ENCODE measurements at regions of chr11 and their contacts with region 1.

Region 1: DNA sequence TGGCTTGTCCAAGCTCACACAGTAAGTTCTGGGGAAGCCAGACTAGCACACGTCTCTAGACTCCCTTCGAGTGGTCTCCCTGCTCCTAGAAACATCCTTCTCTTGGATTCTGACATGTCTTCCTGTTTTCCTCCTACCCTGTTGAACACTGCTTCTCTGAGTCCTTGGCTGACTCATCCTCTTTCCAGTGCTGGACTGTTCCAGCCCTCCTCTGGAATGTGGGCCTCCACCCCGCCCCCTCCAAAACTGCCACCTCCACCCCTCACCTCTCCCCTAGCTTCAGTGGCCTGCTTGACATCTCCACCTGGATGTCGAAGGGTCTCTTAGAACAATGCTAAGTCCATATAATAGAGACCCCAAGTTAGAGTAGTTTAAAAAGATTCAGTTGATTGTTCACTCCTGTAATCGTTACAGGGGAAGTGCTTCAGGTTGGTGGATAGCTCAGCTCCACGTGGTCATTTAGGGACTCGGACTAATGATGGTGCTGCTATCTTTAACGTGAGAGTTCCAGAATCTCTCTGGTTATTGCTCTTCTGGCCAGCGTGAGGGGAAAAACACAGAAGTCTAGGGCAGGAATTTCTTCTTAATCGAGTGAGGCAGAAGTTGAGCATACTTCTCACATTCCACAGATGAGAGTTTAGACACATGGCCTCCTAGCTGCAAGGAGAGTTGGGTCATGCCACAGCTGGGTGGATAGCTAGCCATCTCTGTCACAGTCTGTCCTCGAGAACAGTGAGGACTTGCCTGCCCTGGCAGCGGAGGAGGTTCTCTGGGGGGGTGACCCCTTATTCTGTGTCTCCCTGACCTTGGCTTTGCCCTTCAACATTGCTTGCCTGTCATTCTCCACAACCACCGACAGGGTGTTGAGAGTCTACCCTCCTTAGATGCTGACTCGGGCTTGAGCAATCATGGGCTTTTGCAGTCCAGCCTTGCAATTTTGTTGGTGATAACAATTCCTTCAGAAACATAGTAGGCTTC is 4.7 kb upstream of the C11orf96 start:
- DNase-seq: peak; percentile 70
- ATAC-seq: peak; percentile 68
- H3K4me3 ChIP-seq: no peak overlapping the region
- H3K27ac ChIP-seq: peak overlapping the region; percentile 9; the same call in 1 of the 2 replicates
- H3K4me1 ChIP-seq: peaks cover 19% of the 10 kb centered on the region
- H3K27me3 ChIP-seq: peaks cover 21% of the 10 kb centered on the region
- CTCF ChIP-seq: no peak
- POLR2A ChIP-seq: no peak
- RAD21 ChIP-seq: no peak

Region 2: DNA sequence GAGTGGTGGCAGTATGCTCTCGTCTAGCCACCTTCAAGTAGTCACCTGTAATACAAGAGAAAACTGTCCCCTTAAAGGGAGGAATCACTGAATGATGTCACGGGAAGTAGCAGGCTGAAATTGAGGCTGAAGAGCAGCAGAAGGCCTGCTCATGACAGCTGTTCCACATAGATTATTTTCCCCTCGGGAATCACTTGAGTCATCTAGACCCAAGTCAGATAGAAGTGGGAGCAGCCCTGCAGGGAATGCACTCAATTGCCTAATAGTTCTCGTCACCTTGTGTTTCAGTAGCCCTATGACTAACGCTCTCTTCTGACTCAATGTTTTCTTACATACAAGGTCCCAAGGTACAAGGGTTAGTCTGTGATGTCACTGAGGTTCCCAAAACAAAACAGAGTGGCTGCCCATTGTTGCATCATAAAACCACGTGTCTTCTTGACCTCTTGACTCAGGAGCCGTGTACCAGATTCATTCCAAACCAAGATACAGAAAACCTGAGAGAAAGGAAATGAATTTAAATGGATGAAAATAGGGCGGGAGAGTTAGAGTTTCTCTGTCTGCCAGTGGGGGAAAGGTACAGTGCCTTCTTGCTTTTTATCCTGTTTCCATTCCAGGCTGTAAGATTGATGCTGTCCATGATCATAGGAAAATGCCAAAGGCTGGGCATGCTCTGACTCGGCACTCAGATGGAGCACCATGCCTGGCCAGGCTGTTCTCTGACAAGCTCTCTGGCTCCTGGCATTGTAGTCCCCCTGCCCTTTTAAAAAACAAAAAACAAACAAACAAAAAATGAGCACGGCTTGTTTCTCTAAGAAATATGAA is 16.9 kb before region 1 on chr11:
- CTCF ChIA-PET with region 1: interaction called, 3 read pairs
- POLR2A ChIA-PET with region 1: no interaction called
- dilution Hi-C with region 1: no loop called
- in situ Hi-C with region 1: no loop called
- intact Hi-C with region 1: loop called (anchors 2 kb)
- DNase-seq: peak; percentile 100
- ATAC-seq: peak; percentile 79
- H3K4me3 ChIP-seq: no peak overlapping the region
- H3K27ac ChIP-seq: peak overlapping the region; percentile 46; the same call in 1 of the 2 replicates
- H3K4me1 ChIP-seq: peaks cover 45% of the 10 kb centered on the region
- H3K27me3 ChIP-seq: no peaks in the 10 kb centered on the region
- CTCF ChIP-seq: no peak
- POLR2A ChIP-seq: no peak
- RAD21 ChIP-seq: no peak

Measured in IMR-90 (cell line).